Naive thymus-derived CD4-positive, alpha-beta T cell (primary cell): ENCODE measurements at regions of chr10 and their contacts with region 1.

Region 1: DNA sequence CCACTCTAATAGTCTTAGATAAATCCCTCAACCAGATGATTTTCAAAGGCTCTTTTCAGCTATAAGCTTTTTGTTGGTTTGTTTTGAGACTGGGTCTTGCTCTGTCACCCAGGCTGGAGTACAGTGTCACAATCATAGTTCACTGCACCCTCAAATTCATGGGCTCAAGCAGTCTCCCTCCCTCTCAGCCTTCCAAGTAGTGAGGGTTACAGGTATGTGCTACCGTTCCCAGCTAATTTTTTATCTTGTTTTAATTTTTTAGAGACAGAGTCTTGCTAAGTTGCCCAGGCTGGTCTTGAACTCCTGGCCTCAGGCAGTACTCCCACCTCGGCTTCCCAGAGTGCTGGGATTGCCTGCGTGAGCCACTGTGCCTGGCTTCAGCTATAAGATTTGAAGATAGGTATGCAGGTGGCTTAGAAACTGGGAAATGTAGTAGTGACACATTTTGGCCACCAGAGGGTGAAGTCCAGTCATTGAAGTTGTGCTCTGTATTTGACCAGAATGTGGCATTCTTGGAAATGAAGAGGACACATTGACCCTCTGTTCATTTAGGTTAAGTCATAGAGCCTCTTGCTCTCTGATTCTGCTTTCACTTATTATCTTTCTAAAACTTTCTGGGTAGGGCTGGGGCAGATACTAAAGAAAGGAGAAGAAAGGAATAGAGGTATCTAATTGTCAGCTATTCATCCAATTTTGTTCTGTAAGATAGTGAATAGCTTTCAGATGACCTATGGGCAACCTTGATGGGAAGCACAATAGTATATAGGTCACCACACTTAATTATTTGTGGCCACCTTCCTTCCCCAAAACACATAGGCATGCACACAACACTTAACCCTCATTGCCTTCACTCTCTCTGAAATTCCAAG is 36.0 kb downstream of the R3HCC1L start:
- DNase-seq: peak in 4 of 9 donors; percentile 1 to 24 (median 7)
- ATAC-seq: peak; percentile 65
- H3K4me3 ChIP-seq: no peak overlapping the region
- H3K4me3 Mint-ChIP-seq: no peak overlapping the region
- H3K27ac ChIP-seq: no peak overlapping the region
- H3K27ac Mint-ChIP-seq: peak overlapping the region in 2 of 9 donors; percentile 3 to 59
- H3K4me1 ChIP-seq: peaks cover 0 to 3% of the 10 kb centered on the region in 2 donors
- H3K4me1 Mint-ChIP-seq: peaks cover 2 to 50% (median 27%) of the 10 kb centered on the region in 7 donors
- H3K27me3 ChIP-seq: no peaks in the 10 kb centered on the region
- H3K27me3 Mint-ChIP-seq: no peaks in the 10 kb centered on the region

Region 2: DNA sequence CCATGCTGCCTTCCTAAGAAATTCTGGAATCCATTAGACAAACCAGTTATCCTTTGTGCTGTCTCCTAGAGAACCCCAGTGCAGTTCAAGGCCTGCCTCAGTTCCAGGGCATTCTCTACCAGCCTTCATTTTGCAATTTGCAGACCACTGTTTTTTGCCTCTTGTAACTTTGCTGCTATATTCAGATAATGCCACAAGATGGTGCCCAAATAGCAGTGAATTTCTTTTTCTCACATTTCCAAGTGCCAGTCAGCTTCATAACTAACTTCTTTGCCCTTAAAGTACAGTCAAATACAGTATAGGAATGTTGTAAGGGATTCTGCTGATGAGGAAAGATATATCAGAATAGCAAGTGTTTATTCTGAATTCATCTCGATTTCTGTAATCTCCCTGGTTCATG is 72.3 kb after region 1 on chr10:
- CTCF ChIA-PET with region 1: no interaction called
- POLR2A ChIA-PET with region 1: no interaction called
- intact Hi-C with region 1: no loop called
- DNase-seq: no peak
- ATAC-seq: no peak
- H3K4me3 ChIP-seq: no peak overlapping the region
- H3K4me3 Mint-ChIP-seq: no peak overlapping the region
- H3K27ac ChIP-seq: no peak overlapping the region
- H3K27ac Mint-ChIP-seq: peak overlapping the region in 1 of 9 donors; percentile 56
- H3K4me1 ChIP-seq: no peaks in the 10 kb centered on the region
- H3K4me1 Mint-ChIP-seq: peaks cover 0 to 5% (median 2%) of the 10 kb centered on the region in 7 donors
- H3K27me3 ChIP-seq: no peaks in the 10 kb centered on the region
- H3K27me3 Mint-ChIP-seq: no peaks in the 10 kb centered on the region

Region 3: DNA sequence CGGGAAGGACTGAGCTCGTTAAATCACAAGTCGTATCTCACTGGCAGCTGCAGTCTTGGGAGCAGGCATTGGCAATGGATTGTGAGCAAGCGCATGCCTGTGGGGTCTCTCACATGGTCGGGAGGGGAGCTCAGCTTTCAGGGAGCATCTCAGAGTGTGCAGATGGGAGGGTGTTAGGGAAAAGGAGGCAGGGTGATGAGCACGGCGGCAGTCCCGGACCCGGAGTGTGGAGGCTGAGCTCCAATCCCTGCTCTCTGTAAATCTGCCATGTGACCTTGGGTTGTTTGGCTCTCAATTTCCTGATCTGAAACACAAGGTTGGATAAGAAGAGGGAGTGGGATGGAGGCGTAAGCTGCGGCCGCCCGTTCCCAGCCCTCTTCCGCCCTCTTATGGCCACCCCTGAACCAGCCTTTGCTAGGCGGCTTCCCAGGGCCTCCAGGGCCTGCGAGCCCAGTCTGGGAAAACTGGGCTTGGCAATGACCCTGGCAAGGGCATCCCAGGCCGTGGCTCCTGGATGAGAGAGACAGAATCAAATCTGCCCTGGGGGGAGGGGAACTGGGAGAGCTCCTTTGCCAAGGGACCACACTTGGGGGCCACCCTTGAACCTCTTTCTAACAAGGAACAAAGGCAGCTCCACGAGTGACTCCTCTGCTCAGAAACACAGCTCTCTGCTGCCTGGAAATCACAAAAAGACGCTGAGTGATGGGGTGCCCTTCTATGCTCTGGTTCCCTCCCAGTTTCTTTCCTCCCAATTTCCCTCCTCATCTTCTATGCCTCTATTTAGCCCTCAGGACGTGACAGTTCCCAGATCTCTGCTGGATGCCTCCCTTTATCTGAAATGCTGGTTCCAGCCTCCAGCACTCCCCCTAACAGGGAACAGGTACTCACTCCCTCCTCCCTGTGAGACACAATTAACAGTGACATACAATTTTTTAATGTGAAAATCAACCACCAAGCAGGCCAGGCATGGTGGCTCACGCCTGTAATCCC is 139.2 kb after region 1 on chr10:
- CTCF ChIA-PET with region 1: no interaction called
- POLR2A ChIA-PET with region 1: no interaction called
- intact Hi-C with region 1: loop called in 1 of 2 experiments (anchors 1 kb)
- DNase-seq: peak in 1 of 9 donors; percentile 29
- ATAC-seq: peak; percentile 60
- H3K4me3 ChIP-seq: no peak overlapping the region
- H3K4me3 Mint-ChIP-seq: no peak overlapping the region
- H3K27ac ChIP-seq: no peak overlapping the region
- H3K27ac Mint-ChIP-seq: no peak overlapping the region
- H3K4me1 ChIP-seq: no peaks in the 10 kb centered on the region
- H3K4me1 Mint-ChIP-seq: peaks cover 0 to 3% (median 0%) of the 10 kb centered on the region in 7 donors
- H3K27me3 ChIP-seq: no peaks in the 10 kb centered on the region
- H3K27me3 Mint-ChIP-seq: peaks cover 28 to 46% (median 35%) of the 10 kb centered on the region in 5 donors

Region 4: GRCh38 chr10:98331885-98332284 is 161.4 kb after region 1 on chr10:
- CTCF ChIA-PET with region 1: no interaction called
- POLR2A ChIA-PET with region 1: no interaction called
- intact Hi-C with region 1: loop called in 1 of 2 experiments (anchors 10 kb)
- DNase-seq: no peak
- ATAC-seq: peak; percentile 49
- H3K4me3 ChIP-seq: no peak overlapping the region
- H3K4me3 Mint-ChIP-seq: no peak overlapping the region
- H3K27ac ChIP-seq: no peak overlapping the region
- H3K27ac Mint-ChIP-seq: no peak overlapping the region
- H3K4me1 ChIP-seq: no peaks in the 10 kb centered on the region
- H3K4me1 Mint-ChIP-seq: no peaks in the 10 kb centered on the region
- H3K27me3 ChIP-seq: no peaks in the 10 kb centered on the region
- H3K27me3 Mint-ChIP-seq: peaks cover 0 to 17% (median 6%) of the 10 kb centered on the region in 5 donors